ENCODE measurements at regions of chr13 and their contacts with region 1.

Region 1: DNA sequence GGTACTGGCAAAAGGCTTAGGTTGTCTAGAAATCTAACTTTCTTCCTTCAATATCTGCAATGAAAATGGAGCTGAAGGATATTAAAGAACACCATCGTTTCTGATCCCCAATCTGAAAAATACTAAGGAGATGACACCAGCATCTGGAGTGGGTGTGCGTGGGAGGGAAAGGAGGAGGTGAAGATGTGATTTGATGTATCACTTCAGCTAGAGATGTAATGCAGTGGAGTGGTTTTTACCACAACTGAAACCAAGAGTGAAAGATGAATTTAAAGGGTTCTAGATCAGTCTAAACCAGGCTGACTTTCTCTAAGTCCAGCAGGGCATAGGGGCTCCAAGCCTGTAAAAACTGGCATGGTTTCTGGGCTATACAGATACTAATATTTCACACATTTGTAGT is 148.4 kb downstream of the AKAP11 start:
- DNase-seq: no peak
- H3K4me3 Mint-ChIP-seq: no peak overlapping the region
- H3K27ac Mint-ChIP-seq: peak overlapping the region; percentile 58
- H3K4me1 Mint-ChIP-seq: peaks cover 44% of the 10 kb centered on the region
- H3K27me3 Mint-ChIP-seq: no peaks in the 10 kb centered on the region

Region 2: DNA sequence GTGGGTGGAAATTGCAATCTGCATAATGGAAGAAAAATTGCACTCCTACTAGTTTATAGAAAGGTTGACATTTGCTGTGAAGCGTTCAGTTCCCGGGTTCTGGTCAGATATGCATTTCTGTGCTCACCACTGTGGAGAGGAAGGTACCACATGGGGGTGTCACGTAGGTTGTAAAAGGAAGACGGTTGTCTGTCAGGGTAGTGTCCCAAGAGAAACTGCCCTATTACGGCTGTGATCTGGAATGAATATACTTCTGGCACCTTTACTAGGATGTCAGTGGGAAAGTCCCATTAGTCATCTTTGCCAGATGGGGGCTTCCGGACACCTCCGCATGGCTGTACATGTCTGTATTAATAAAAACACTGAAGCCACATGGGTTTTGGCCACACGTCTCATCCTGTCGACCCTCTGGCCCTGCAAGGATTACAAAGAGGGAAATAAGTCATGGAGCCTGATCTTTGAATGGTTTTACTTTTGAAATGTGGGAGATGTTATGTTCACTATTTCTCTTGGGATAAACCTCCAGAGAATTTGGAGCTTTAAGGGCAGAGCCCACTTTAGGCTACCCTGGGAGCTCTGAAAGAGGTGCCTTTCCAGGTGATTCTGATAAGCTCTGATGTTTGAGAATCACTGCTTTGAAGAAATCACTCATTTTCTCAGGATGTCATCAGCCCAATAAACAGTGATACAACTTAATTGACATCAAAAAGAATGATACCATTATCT is 14.5 kb before region 1 on chr13:
- intact Hi-C with region 1: loop called (anchors 1 kb)
- DNase-seq: no peak
- H3K4me3 Mint-ChIP-seq: peak overlapping the region; percentile 62
- H3K27ac Mint-ChIP-seq: peak overlapping the region; percentile 96
- H3K4me1 Mint-ChIP-seq: peaks cover 68% of the 10 kb centered on the region
- H3K27me3 Mint-ChIP-seq: no peaks in the 10 kb centered on the region

Measured in activated T-helper 2 cell treated with anti-CD3 and anti-CD28 coated beads, Interferon-gamma antibody, Interleukin-2, Interleukin-4, amounts not matched to agents 10 μg/mL and 5 μg/mL and 100 μg/mL, durations not matched to agents 14 hours and 24 hours and 36 hours (primary cell).